Esophagus muscularis mucosa (tissue), 4 donors: ENCODE measurements at regions of chr1 and their contacts with region 1.

Region 1: DNA sequence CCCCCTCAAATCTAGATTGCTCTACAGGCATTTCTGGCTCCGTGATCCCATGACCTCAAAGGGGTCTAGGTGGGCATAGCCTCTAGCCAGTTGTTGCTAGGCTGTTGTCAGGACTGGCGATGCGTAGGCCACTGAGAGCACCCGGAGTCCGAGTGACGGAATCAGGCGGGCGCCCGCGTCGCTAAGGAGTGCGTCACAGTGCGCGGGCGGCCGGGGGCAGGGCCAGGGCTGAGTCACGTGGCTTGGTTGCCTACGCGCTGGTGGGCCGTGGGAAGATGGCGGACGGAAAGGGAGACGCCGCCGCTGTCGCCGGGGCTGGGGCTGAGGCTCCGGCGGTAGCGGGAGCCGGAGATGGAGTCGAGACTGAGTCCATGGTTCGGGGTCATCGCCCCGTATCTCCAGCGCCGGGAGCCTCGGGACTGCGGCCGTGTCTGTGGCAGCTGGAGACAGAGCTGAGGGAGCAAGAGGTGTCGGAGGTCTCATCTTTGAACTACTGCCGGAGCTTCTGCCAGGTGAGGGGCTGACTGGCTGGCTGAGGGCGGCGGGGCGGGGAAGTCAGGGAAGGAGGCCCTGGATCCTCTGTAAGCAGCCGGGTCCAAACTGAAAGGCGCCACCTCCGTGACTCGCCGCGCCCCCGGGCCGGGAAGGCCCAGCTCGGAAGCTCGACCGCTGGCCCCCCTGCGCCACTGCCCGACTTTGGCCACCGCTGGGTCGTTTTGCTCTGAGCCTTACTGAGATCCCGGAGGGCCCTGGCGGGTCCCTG is at the start of gene RLF:
- DNase-seq: peak; percentile 99
- H3K4me3 ChIP-seq: peak within 1 kb of the TSS; percentile 73 to 92 (median 86)
- H3K27ac ChIP-seq: peak within 1 kb of the TSS; percentile 93 to 98 (median 96)
- H3K4me1 ChIP-seq: peaks cover 35 to 47% (median 44%) of the 10 kb centered on the region in 4 donors
- H3K27me3 ChIP-seq: no peaks in the 10 kb centered on the region
- CTCF ChIP-seq: peak in 1 of 3 experiments; percentile 27
- EP300 ChIP-seq: peak; percentile 27
- POLR2A ChIP-seq: peak; percentile 87
- total RNA-seq, gene RLF: 15.1 to 23.7 (median 21.2) TPM

Region 2: DNA sequence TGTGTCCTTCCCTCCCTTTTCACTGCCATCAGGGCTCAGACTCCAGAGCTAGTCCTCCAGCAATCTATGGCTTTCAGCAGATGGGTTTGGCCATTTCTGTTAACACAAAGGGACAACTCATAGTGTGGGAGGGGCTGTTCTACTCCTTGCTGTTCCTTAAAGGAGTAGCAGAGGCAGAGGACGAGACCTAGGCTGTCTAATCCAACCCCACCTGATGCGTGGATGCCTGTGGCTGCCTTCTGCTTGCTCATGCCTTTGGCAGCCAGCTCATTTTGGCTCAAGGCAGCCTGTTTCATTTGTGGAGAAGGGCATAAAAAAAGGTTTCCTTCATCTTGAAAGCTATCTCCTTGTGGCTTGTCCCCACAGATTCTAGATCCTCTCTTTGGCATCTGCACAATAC is 179.3 kb before region 1 on chr1:
- intact Hi-C with region 1: no loop called
- DNase-seq: no peak
- H3K4me3 ChIP-seq: no peak overlapping the region
- H3K27ac ChIP-seq: no peak overlapping the region
- H3K4me1 ChIP-seq: no peaks in the 10 kb centered on the region
- H3K27me3 ChIP-seq: no peaks in the 10 kb centered on the region
- CTCF ChIP-seq: no peak
- EP300 ChIP-seq: no peak
- POLR2A ChIP-seq: no peak

Region 3: DNA sequence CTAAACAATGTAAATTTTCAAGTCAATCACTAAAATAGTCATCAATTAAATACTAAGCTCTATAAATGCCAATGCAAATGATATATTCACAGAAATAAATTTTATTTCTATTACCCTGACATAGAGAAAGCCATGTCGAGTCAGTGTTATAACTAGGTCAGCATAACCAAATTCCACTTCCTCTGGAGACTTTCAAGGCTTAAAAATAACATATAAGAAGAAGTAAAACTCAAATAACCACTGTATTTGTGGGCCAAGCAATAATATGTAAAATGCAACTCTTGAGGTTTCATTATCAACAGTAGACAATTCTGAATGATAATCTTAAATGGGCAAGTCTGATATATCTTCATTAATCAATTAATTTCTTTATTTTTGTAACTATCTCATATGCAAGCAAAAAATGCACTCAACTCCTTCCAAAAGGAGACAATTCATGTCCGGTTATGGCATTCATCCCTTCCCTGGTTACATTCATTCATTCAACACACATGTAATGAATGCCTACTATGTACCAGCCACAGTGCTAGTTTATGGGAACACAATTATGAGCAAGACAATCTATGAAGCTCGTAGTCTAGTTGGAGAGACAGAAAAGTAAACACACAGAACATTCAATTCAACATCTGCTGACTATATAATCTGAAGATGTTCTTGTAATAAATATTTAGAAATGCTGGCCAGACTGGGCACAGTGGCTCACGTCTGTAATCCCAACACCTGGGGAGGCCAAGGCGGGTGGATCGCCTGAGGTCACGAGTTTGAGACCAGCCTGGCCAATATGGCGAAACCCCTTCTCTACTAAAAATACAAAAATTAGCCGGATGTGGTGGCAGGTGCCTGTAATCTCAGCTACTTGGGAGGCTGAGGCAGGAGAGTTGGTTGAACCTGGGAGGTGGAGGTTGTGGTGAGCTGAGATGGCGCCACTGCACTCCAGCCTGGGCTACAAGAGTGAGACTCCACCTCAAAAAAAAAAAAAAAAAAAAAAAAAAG is 157.9 kb before region 1 on chr1:
- intact Hi-C with region 1: no loop called
- DNase-seq: no peak
- H3K4me3 ChIP-seq: no peak overlapping the region
- H3K27ac ChIP-seq: no peak overlapping the region
- H3K4me1 ChIP-seq: peaks cover 0 to 5% (median 0%) of the 10 kb centered on the region in 4 donors
- H3K27me3 ChIP-seq: no peaks in the 10 kb centered on the region
- CTCF ChIP-seq: no peak
- EP300 ChIP-seq: no peak
- POLR2A ChIP-seq: no peak

Region 4: DNA sequence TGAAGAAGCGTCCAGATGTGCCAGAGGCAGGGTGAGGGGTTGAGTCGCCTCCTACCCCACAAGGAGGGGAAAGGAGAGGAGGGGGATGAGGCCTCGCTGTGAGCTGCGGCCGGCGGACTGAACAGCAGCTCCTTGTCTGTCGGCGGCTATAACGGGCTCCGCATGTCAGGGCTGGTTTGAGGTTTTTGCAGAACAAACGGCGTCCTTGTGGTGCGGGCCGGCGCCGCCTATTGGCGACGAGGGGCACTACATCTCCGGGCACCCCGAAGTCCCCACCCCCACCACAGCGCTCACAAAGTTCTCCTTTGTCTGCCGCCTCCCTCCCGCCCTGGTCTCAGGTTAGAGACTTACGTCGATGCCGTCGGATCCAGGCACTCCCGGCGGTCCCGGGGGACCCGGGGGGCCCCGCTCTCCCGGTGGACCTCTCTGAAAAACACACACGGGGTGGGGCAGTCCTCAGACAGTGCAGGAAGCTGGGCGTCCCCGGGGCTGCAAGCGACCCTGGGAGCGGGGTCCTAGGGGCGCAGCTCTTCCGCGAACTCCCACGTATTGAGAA is 154.0 kb after region 1 on chr1:
- intact Hi-C with region 1: loop called (anchors 5 kb)
- DNase-seq: peak; percentile 96
- H3K4me3 ChIP-seq: peak overlapping the region; percentile 50 to 62 (median 52)
- H3K27ac ChIP-seq: peak overlapping the region; percentile 45 to 68 (median 60)
- H3K4me1 ChIP-seq: peaks cover 24 to 31% (median 30%) of the 10 kb centered on the region in 4 donors
- H3K27me3 ChIP-seq: peaks cover 0 to 48% (median 20%) of the 10 kb centered on the region in 4 donors
- CTCF ChIP-seq: peak; percentile 92 to 99 (median 95)
- EP300 ChIP-seq: no peak
- POLR2A ChIP-seq: no peak